Caco-2 (cell line): ENCODE measurements at regions of chr4 and their contacts with region 1.

Region 1: GRCh38 chr4:169270810-169271691 is at the start of gene SH3RF1:
- DNase-seq: peak; percentile 88 to 89
- H3K4me3 ChIP-seq: peak within 1 kb of the TSS; percentile 71
- H3K4me3 Mint-ChIP-seq: peak within 1 kb of the TSS; percentile 96
- H3K27ac Mint-ChIP-seq: peak within 1 kb of the TSS; percentile 95
- H3K4me1 ChIP-seq: peaks cover 43% of the 10 kb centered on the region
- H3K4me1 Mint-ChIP-seq: peaks cover 38% of the 10 kb centered on the region
- H3K27me3 ChIP-seq: no peaks in the 10 kb centered on the region
- H3K27me3 Mint-ChIP-seq: no peaks in the 10 kb centered on the region
- CTCF ChIP-seq: peak; percentile 20 to 35
- total RNA-seq, gene SH3RF1: 25.1 and 28.1 TPM in 2 replicates

Region 2: DNA sequence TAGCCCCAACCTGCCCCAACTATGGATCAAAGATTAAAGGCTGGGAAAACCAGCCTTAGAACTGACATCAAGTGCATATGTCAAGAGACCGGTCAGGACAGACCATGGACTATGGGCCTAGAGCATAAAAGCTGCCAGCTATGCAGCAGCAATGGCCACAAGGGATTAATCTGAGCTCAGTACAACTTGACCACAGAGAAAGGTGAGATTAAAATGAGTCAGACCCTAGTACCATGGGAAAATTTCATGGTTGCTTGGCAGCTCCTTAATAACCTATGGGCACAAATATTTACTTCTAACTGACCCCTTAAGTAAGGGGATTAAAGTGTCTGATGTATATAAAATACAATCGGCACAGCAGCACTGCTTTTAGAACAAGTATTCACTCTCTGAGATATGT is 315.4 kb before region 1 on chr4:
- CTCF ChIA-PET with region 1: no interaction called
- POLR2A ChIA-PET with region 1: no interaction called
- intact Hi-C with region 1: no loop called
- DNase-seq: no peak
- H3K4me3 ChIP-seq: no peak overlapping the region
- H3K4me3 Mint-ChIP-seq: no peak overlapping the region
- H3K27ac Mint-ChIP-seq: no peak overlapping the region
- H3K4me1 ChIP-seq: no peaks in the 10 kb centered on the region
- H3K4me1 Mint-ChIP-seq: no peaks in the 10 kb centered on the region
- H3K27me3 ChIP-seq: no peaks in the 10 kb centered on the region
- H3K27me3 Mint-ChIP-seq: peaks cover 2% of the 10 kb centered on the region
- CTCF ChIP-seq: no peak

Region 3: DNA sequence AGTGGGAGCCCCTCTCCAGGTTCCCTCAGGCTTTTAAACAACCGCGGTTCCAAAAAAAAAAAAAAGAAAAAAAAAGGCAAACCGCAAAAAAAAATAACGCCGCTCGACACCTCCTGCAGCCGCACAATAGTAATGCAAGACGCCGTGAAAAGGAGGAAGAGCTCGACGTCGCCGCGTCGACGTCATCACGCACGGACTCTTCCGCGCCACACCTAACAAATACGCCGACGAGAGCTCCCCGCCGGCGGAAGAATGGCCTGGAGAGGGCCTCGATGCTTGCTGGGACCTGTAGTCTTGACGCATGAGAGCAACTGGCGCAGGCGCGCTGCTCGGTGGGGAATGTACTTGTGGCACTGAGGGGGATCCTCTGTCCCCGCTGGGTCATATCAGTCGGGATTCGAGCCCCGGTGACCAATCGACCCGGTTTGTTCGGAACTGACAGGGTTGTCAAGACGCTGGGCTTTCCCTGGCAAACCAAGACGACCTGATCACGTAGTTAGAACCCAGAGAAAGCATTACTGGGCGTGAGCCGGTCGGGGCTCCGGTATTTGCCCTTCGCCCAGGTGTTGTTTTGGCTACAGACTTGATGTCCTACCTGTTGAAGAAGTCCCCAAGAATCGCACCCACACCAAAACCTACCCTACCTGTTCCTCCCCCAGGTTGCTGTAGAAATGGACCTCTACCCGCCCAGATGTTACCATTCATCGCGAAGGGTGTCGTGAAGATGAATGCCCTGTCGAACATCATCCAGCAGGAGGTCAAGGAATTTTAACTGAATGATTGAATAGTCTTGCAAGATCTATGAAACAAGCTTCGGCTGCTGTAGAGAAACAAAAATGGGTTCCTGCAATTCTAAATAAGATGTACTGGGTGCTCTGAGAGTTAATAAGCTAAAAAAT is 260.7 kb before region 1 on chr4 and contains the start of gene CBR4:
- CTCF ChIA-PET with region 1: no interaction called
- POLR2A ChIA-PET with region 1: interaction called, 13 read pairs
- intact Hi-C with region 1: loop called (anchors 2 kb)
- DNase-seq: peak; percentile 94 to 97
- H3K4me3 ChIP-seq: peak within 1 kb of the TSS; percentile 65
- H3K4me3 Mint-ChIP-seq: peak within 1 kb of the TSS; percentile 91
- H3K27ac Mint-ChIP-seq: peak within 1 kb of the TSS; percentile 97
- H3K4me1 ChIP-seq: peaks cover 28% of the 10 kb centered on the region
- H3K4me1 Mint-ChIP-seq: peaks cover 16% of the 10 kb centered on the region
- H3K27me3 ChIP-seq: no peaks in the 10 kb centered on the region
- H3K27me3 Mint-ChIP-seq: no peaks in the 10 kb centered on the region
- CTCF ChIP-seq: peak; percentile 23 to 41
- total RNA-seq, gene CBR4: 21.4 and 22.5 TPM in 2 replicates

Region 4: GRCh38 chr4:169115897-169116254 is 155.2 kb before region 1 on chr4:
- CTCF ChIA-PET with region 1: no interaction called
- POLR2A ChIA-PET with region 1: no interaction called
- intact Hi-C with region 1: loop called (anchors 5 kb)
- DNase-seq: peak; percentile 29 to 52
- H3K4me3 ChIP-seq: no peak overlapping the region
- H3K4me3 Mint-ChIP-seq: no peak overlapping the region
- H3K27ac Mint-ChIP-seq: peak overlapping the region; percentile 37
- H3K4me1 ChIP-seq: peaks cover 7% of the 10 kb centered on the region; the same call in 1 of the 2 replicates
- H3K4me1 Mint-ChIP-seq: peaks cover 8% of the 10 kb centered on the region
- H3K27me3 ChIP-seq: no peaks in the 10 kb centered on the region
- H3K27me3 Mint-ChIP-seq: no peaks in the 10 kb centered on the region
- CTCF ChIP-seq: peak in 1 of 2 experiments; percentile 39

Region 5: DNA sequence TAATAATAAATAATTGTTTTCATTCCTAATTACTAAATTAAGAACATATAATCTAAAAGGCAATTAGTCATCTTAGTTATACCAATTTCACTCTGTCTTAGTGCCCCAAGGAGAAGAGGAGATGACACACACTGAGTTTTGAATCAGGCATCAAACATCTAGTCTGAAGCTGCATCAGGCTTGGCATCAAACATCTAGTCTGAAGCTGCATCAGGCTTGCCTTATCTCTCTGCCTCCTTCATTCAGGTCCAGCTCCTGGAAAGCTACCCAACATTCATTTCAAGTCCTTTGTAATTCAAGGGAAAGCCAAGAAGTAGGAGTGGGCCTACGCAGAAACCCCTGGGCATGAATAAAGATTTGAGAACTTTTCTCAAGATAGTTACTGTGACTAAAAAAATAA is 62.5 kb before region 1 on chr4:
- CTCF ChIA-PET with region 1: no interaction called
- POLR2A ChIA-PET with region 1: no interaction called
- intact Hi-C with region 1: loop called (anchors 2 kb)
- DNase-seq: no peak
- H3K4me3 ChIP-seq: no peak overlapping the region
- H3K4me3 Mint-ChIP-seq: peak overlapping the region; percentile 51
- H3K27ac Mint-ChIP-seq: peak overlapping the region; percentile 11
- H3K4me1 ChIP-seq: peaks cover 41% of the 10 kb centered on the region
- H3K4me1 Mint-ChIP-seq: peaks cover 32% of the 10 kb centered on the region
- H3K27me3 ChIP-seq: no peaks in the 10 kb centered on the region
- H3K27me3 Mint-ChIP-seq: no peaks in the 10 kb centered on the region
- CTCF ChIP-seq: no peak

Region 6: GRCh38 chr4:169243808-169244207 is 27.2 kb before region 1 on chr4:
- CTCF ChIA-PET with region 1: no interaction called
- POLR2A ChIA-PET with region 1: no interaction called
- intact Hi-C with region 1: no loop called
- DNase-seq: peak in 1 of 2 experiments; percentile 10
- H3K4me3 ChIP-seq: no peak overlapping the region
- H3K4me3 Mint-ChIP-seq: no peak overlapping the region
- H3K27ac Mint-ChIP-seq: no peak overlapping the region
- H3K4me1 ChIP-seq: peaks cover 8% of the 10 kb centered on the region
- H3K4me1 Mint-ChIP-seq: peaks cover 21% of the 10 kb centered on the region
- H3K27me3 ChIP-seq: no peaks in the 10 kb centered on the region
- H3K27me3 Mint-ChIP-seq: no peaks in the 10 kb centered on the region
- CTCF ChIP-seq: no peak

Region 7: DNA sequence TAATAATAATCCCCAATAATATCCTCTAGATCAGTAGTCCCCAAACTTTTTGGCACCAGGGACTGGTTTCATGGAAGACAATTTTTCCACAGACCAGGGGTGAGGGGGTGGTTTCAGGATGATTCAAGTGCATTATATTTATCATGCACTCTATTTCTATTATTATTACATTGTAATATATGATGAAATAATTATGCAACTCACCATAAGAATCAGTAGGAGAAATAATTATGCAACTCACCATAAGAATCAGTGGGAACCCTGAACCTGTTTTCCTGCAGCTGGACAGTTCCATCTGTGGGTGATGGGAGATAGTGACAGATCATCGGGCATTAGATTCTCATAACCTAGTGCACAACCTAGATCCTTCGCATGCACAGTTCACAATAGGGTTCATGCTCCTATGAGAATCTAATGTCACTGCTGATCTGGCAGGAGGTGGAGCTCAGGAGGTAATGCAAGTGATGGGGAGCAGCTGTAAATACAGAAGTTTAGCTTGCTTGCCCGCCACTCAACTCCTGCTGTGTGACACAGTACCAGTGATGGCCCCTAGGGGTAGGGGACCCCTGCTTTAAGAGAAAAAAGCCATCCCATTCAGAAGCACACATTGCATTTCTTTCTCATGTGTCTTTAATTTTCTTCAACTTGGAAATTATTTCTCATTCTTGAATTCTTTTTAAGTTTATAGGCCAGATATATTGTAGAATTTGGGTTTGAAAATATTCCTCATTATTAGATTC is 15.7 kb after region 1 on chr4:
- CTCF ChIA-PET with region 1: no interaction called
- POLR2A ChIA-PET with region 1: no interaction called
- intact Hi-C with region 1: no loop called
- DNase-seq: no peak
- H3K4me3 ChIP-seq: no peak overlapping the region
- H3K4me3 Mint-ChIP-seq: no peak overlapping the region
- H3K27ac Mint-ChIP-seq: no peak overlapping the region
- H3K4me1 ChIP-seq: peaks cover 19% of the 10 kb centered on the region
- H3K4me1 Mint-ChIP-seq: peaks cover 8% of the 10 kb centered on the region
- H3K27me3 ChIP-seq: no peaks in the 10 kb centered on the region
- H3K27me3 Mint-ChIP-seq: no peaks in the 10 kb centered on the region
- CTCF ChIP-seq: peak in 1 of 2 experiments; percentile 14

Region 8: DNA sequence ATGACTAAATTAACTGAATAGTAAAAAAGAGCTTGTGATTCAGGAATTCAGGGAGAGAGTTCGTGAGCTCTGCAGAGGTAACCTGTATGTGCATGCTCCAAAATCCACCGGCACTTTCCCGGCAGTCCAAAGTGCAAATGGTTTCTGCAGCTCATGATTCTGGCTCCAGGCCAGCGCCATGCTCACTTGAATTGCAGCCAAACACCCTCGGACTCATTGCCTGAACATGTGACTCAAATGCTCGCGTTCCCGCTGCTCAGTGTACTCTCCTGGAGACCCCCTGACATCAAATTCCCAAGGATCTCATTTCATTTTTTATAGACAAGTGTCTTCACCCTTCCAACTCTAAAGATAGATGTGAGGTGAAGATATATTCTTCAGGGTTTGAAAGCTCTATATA is 43.9 kb after region 1 on chr4:
- CTCF ChIA-PET with region 1: no interaction called
- POLR2A ChIA-PET with region 1: interaction called, 6 read pairs
- intact Hi-C with region 1: loop called (anchors 2 kb)
- DNase-seq: peak; percentile 53 to 77
- H3K4me3 ChIP-seq: no peak overlapping the region
- H3K4me3 Mint-ChIP-seq: peak overlapping the region; percentile 46
- H3K27ac Mint-ChIP-seq: peak overlapping the region; percentile 50
- H3K4me1 ChIP-seq: peaks cover 26% of the 10 kb centered on the region
- H3K4me1 Mint-ChIP-seq: peaks cover 14% of the 10 kb centered on the region
- H3K27me3 ChIP-seq: no peaks in the 10 kb centered on the region
- H3K27me3 Mint-ChIP-seq: no peaks in the 10 kb centered on the region
- CTCF ChIP-seq: no peak

Region 9: DNA sequence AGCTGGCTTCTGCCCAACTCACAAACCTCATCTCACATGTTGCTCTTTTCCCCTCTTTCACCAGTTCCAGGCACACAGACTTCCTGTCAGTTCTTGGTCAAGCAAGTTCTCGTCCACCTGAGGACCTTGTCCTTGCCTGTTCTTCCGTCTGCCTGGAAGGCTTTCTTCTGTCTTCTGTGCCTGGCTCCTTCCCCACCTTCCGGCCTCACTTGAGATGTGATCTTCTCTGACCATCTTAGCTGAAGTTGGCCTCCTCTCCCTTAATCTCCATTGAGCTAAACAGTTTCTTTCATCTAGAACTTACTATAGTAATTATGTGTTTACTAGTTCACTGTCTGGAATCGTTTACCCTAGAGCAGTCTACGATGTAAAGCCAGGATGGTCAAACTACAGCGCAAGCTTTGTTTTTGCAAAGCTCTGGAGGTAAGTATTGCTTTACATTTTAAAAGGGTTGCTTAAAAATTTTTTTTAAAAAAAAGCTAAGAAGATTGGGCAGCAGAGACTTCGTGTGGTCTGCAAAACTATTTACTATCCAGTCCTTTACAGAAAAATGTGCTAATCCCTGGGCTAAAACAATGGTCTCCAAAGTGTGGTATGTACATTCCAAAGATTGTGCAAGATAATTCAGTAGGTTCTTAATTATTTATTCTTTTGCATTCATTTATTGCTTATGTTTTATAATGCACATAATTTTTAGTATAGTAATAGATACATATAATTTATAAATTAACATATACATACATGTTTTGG is 641.8 kb after region 1 on chr4:
- CTCF ChIA-PET with region 1: no interaction called
- POLR2A ChIA-PET with region 1: no interaction called
- intact Hi-C with region 1: no loop called
- DNase-seq: no peak
- H3K4me3 ChIP-seq: no peak overlapping the region
- H3K4me3 Mint-ChIP-seq: no peak overlapping the region
- H3K27ac Mint-ChIP-seq: no peak overlapping the region
- H3K4me1 ChIP-seq: no peaks in the 10 kb centered on the region
- H3K4me1 Mint-ChIP-seq: no peaks in the 10 kb centered on the region
- H3K27me3 ChIP-seq: no peaks in the 10 kb centered on the region
- H3K27me3 Mint-ChIP-seq: peaks cover 4% of the 10 kb centered on the region
- CTCF ChIP-seq: no peak